ENCODE measurements at regions of chr22 and their contacts with region 1.

Region 1: GRCh38 chr22:43230971-43231723 is 44.2 kb upstream of the TTLL12 start:
- DNase-seq: peak; percentile 70
- H3K4me3 ChIP-seq: no peak overlapping the region
- H3K27ac ChIP-seq: no peak overlapping the region
- H3K4me1 ChIP-seq: peaks cover 4% of the 10 kb centered on the region
- CTCF ChIP-seq: peak; percentile 98

Region 2: DNA sequence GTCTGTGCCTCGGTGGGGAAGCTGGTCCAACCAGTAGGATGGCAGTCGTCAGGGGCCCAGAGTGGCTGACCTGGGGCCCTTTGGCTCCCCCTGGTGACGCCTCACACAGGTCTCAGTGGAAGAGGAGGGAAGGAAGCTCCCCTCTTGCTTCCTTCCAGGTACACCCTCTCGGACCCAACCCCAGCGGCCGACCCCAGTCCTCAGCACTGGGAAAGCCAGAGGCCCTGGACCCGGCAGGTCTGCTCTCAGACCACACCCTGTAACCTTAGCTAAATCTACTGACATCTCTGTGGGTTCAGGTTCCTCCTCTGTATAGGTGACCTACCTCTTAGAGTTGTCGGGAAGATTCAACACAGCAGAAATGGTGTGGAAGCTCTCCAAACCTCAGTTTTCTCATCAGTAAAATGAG is 115.4 kb after region 1 on chr22:
- CTCF ChIA-PET with region 1: no interaction called
- POLR2A ChIA-PET with region 1: no interaction called
- intact Hi-C with region 1: loop called (anchors 1 kb)
- DNase-seq: peak; percentile 55
- H3K4me3 ChIP-seq: no peak overlapping the region
- H3K27ac ChIP-seq: no peak overlapping the region
- H3K4me1 ChIP-seq: no peaks in the 10 kb centered on the region
- CTCF ChIP-seq: peak; percentile 84

Measured in OCI-LY7 (cell line).